ENCODE measurements at regions of chr11 and their contacts with region 1.

Region 1: GRCh38 chr11:95705485-95706124 is 84.0 kb downstream of the FAM76B start:
- DNase-seq: peak; percentile 69 to 90 (median 74)
- ATAC-seq: peak; percentile 90
- H3K4me3 ChIP-seq: no peak overlapping the region
- H3K27ac ChIP-seq: no peak overlapping the region
- H3K4me1 ChIP-seq: peaks cover 4 to 40% of the 10 kb centered on the region in 2 experiments; a peak in 2 of 5 replicates
- H3K27me3 ChIP-seq: no peaks in the 10 kb centered on the region
- CTCF ChIP-seq: peak; percentile 87 to 92 (median 92)
- EP300 ChIP-seq: no peak
- POLR2A ChIP-seq: no peak
- RAD21 ChIP-seq: peak; percentile 97 to 98

Region 2: DNA sequence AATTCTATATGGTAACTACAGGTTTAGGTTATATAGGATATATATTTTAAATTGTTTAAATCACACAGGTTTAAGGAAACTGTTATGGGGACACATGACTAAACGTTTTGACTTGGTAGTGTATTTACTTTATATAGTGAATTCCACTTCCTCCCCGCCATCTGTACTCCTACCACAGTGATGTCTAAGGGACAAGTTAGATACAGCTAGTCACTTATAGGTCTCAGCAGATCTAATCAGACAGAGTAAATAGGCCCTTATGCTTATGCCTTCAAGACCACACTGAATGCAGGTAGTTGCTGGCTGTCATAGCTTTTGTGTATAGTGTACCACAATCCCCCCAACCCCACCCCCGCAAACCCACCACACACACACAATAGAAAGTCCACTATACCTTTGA is 482.8 kb before region 1 on chr11:
- CTCF ChIA-PET with region 1: no interaction called
- POLR2A ChIA-PET with region 1: no interaction called
- in situ Hi-C with region 1: no loop called
- intact Hi-C with region 1: loop called (anchors 5 kb)
- DNase-seq: peak in 2 of 4 experiments; percentile 15 to 26
- ATAC-seq: peak; percentile 76
- H3K4me3 ChIP-seq: no peak overlapping the region
- H3K27ac ChIP-seq: no peak overlapping the region
- H3K4me1 ChIP-seq: no peaks in the 10 kb centered on the region; a peak in 2 of 5 replicates
- H3K27me3 ChIP-seq: no peaks in the 10 kb centered on the region; a peak in 1 of 5 replicates
- CTCF ChIP-seq: no peak
- EP300 ChIP-seq: no peak
- POLR2A ChIP-seq: no peak
- RAD21 ChIP-seq: no peak

Region 3: GRCh38 chr11:95505927-95506426 is 199.6 kb before region 1 on chr11:
- CTCF ChIA-PET with region 1: no interaction called
- POLR2A ChIA-PET with region 1: no interaction called
- in situ Hi-C with region 1: no loop called
- intact Hi-C with region 1: loop called (anchors 5 kb)
- DNase-seq: peak in 1 of 4 experiments; percentile 17
- ATAC-seq: peak; percentile 71; the same call in 2 of the 3 replicates
- H3K4me3 ChIP-seq: no peak overlapping the region
- H3K27ac ChIP-seq: no peak overlapping the region
- H3K4me1 ChIP-seq: peaks cover 0 to 9% of the 10 kb centered on the region in 2 experiments; a peak in 1 of 5 replicates
- H3K27me3 ChIP-seq: no peaks in the 10 kb centered on the region; a peak in 2 of 5 replicates
- CTCF ChIP-seq: no peak
- EP300 ChIP-seq: peak; percentile 26; the same call in 1 of the 2 replicates
- POLR2A ChIP-seq: no peak
- RAD21 ChIP-seq: peak in 1 of 2 experiments; percentile 22; a peak in 1 of 4 replicates

Region 4: GRCh38 chr11:95592471-95592870 is 113.1 kb before region 1 on chr11:
- CTCF ChIA-PET with region 1: no interaction called
- POLR2A ChIA-PET with region 1: no interaction called
- in situ Hi-C with region 1: no loop called
- intact Hi-C with region 1: loop called (anchors 10 kb)
- DNase-seq: no peak
- ATAC-seq: no peak
- H3K4me3 ChIP-seq: no peak overlapping the region
- H3K27ac ChIP-seq: no peak overlapping the region
- H3K4me1 ChIP-seq: no peaks in the 10 kb centered on the region
- H3K27me3 ChIP-seq: no peaks in the 10 kb centered on the region; a peak in 1 of 5 replicates
- CTCF ChIP-seq: no peak
- EP300 ChIP-seq: no peak
- POLR2A ChIP-seq: no peak
- RAD21 ChIP-seq: no peak

Region 5: DNA sequence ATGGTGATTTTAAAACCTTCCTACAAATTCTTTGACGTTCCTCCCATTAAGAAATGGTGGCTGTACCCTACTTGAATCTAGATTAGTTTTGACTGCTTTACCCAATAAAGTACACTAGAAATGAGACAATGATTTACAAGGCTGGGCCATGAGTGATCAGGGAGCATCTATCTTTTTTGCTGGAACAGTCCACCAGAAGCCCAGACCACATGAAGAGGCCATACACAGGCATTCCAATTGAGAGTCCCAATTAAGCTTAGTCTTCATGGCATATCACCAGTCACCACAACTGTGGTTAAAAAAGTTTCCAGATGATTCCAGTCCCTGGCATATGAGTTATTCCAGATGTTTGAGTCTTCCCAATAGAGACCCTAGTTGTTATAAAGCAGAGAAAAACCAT is 44.5 kb after region 1 on chr11:
- CTCF ChIA-PET with region 1: no interaction called
- POLR2A ChIA-PET with region 1: no interaction called
- in situ Hi-C with region 1: loop called (anchors 5 kb)
- intact Hi-C with region 1: no loop called
- DNase-seq: no peak
- ATAC-seq: no peak
- H3K4me3 ChIP-seq: no peak overlapping the region
- H3K27ac ChIP-seq: no peak overlapping the region
- H3K4me1 ChIP-seq: peaks cover 0 to 5% of the 10 kb centered on the region in 2 experiments; a peak in 2 of 5 replicates
- H3K27me3 ChIP-seq: no peaks in the 10 kb centered on the region
- CTCF ChIP-seq: no peak
- EP300 ChIP-seq: no peak
- POLR2A ChIP-seq: no peak
- RAD21 ChIP-seq: no peak

Region 6: GRCh38 chr11:95968585-95968984 is 263.0 kb after region 1 on chr11:
- CTCF ChIA-PET with region 1: no interaction called
- POLR2A ChIA-PET with region 1: no interaction called
- in situ Hi-C with region 1: no loop called
- intact Hi-C with region 1: no loop called
- DNase-seq: peak in 1 of 4 experiments; percentile 25
- ATAC-seq: no peak
- H3K4me3 ChIP-seq: no peak overlapping the region
- H3K27ac ChIP-seq: no peak overlapping the region
- H3K4me1 ChIP-seq: peaks cover 0 to 5% of the 10 kb centered on the region in 2 experiments; a peak in 3 of 5 replicates
- H3K27me3 ChIP-seq: no peaks in the 10 kb centered on the region
- CTCF ChIP-seq: peak; percentile 23 to 47 (median 35); a peak in 3 of 6 replicates
- EP300 ChIP-seq: no peak
- POLR2A ChIP-seq: no peak
- RAD21 ChIP-seq: peak in 1 of 2 experiments; percentile 48; a peak in 2 of 4 replicates

Region 7: GRCh38 chr11:96091476-96091875 is 385.9 kb after region 1 on chr11:
- CTCF ChIA-PET with region 1: no interaction called
- POLR2A ChIA-PET with region 1: no interaction called
- in situ Hi-C with region 1: no loop called
- intact Hi-C with region 1: no loop called
- DNase-seq: no peak
- ATAC-seq: peak; percentile 67
- H3K4me3 ChIP-seq: no peak overlapping the region
- H3K27ac ChIP-seq: no peak overlapping the region
- H3K4me1 ChIP-seq: peaks cover 2 to 4% of the 10 kb centered on the region in 2 experiments; a peak in 4 of 5 replicates
- H3K27me3 ChIP-seq: no peaks in the 10 kb centered on the region
- CTCF ChIP-seq: peak; percentile 26 to 38 (median 29); a peak in 3 of 6 replicates
- EP300 ChIP-seq: no peak
- POLR2A ChIP-seq: no peak
- RAD21 ChIP-seq: peak; percentile 29 to 58; a peak in 3 of 4 replicates